ENCODE measurements at regions of chr11 and their contacts with region 1.

Region 1: DNA sequence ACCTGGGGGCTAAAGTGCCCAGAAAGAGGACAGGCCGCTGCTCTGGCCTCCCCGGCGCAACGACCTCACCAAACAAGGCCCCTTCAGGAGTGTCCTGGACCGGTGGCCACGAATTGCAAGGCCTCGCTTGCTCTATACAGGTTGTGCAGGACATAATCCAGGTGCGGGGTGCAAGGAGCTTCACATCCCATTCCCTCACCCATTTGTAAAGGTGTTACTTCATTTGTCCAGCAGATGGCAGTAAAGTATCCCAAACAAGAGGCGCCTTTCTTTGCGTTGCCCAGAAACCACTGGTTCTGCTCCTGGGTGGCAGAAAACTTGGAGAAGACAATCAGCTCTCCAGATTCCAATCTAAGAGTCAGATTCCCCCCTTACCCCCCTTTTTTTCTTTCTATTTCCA is 35.9 kb upstream of the PRDM11 start:
- DNase-seq: no peak
- H3K4me3 ChIP-seq: no peak overlapping the region
- H3K27ac ChIP-seq: no peak overlapping the region
- H3K4me1 ChIP-seq: no peaks in the 10 kb centered on the region
- H3K27me3 ChIP-seq: peaks cover 0 to 23% of the 10 kb centered on the region in 2 donors
- CTCF ChIP-seq: peak; percentile 78 to 90

Region 2: DNA sequence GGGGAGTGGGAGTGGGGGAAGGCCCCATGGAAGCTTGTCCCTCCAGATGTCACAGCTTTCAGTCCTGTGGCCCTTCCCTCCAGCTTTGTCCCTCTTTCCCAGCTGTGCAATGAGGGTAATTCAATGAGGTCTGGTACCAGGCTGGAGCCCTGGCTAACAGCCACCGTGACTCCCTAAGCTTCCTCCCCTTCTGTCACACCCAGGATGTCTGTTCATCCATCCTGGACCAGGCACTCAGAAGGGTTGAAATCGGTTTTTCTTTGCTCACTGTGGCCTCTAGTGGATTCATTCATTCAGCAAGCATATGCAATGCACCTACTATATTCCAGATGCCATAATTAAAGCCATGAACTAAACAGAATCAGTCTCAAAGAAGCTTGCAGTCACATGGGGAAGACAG is 136.9 kb after region 1 on chr11:
- intact Hi-C with region 1: loop called (anchors 10 kb)
- DNase-seq: no peak
- H3K4me3 ChIP-seq: no peak overlapping the region
- H3K27ac ChIP-seq: no peak overlapping the region
- H3K4me1 ChIP-seq: peaks cover 0 to 2% (median under 1%) of the 10 kb centered on the region in 4 donors
- H3K27me3 ChIP-seq: peaks cover 0 to 12% of the 10 kb centered on the region in 2 donors
- CTCF ChIP-seq: no peak

Region 3: DNA sequence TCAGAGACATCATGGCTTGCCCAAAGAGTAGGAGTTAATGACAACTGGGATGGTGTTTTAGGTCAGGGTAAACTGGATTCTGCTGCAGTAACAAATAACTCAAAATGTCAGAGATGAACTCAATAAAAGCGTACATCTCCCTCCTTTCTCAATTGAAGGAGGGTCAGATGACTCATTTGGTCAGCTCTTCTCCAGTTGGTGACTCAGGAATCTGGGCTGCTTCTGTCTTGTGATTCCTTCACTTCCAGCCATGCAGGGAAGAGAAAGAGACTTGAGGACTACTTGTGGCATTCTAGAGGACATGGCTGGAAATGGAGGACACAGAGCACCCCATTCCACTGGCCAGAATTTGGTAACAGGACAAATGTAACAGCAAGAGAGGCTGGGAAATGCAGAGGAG is 178.8 kb after region 1 on chr11:
- intact Hi-C with region 1: loop called (anchors 2 kb)
- DNase-seq: no peak
- H3K4me3 ChIP-seq: no peak overlapping the region
- H3K27ac ChIP-seq: no peak overlapping the region
- H3K4me1 ChIP-seq: peaks cover 0 to 10% (median 7%) of the 10 kb centered on the region in 4 donors
- H3K27me3 ChIP-seq: peaks cover 3 to 71% of the 10 kb centered on the region in 2 donors
- CTCF ChIP-seq: no peak

Region 4: DNA sequence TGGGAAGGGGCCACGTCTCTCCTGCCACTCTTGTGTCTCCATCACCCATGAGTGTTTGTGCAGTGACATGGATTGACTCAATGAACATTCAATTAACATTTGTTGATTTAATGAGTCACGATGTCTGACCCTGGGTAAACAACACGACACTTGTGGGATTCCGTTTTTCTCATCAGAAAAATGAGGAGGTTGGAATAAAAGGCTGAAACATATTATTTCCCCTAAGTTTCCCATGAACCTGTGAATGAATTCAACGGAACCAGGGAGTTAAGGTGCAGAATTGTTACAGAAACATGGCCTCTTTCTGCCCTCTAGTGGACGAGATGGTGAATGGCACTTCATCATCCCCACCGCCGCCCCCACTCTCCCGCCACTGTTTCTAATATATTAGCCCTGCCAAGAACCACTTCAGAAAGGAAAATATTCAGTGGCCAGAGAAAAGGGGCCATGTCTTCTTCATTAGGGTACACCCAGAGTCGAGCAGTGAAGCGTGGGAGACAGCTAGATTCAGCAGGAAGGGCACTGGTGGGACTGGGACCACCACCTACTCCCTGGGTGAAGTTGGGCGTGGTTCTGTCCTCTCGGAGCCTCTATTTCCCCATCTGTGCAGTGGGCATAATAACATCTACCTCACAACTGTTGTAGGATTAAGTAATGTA is 221.8 kb after region 1 on chr11:
- intact Hi-C with region 1: loop called (anchors 2 kb)
- DNase-seq: peak in 1 of 2 donors; percentile 72
- H3K4me3 ChIP-seq: peak overlapping the region; percentile 30 to 36
- H3K27ac ChIP-seq: peak overlapping the region; percentile 69 to 72
- H3K4me1 ChIP-seq: peaks cover 0 to 22% (median 8%) of the 10 kb centered on the region in 4 donors
- H3K27me3 ChIP-seq: peaks cover 0 to 3% of the 10 kb centered on the region in 2 donors
- CTCF ChIP-seq: peak; percentile 61 to 81